ENCODE measurements at regions of chr3 and their contacts with region 1.

Region 1: GRCh38 chr3:48188266-48189201 is at the start of gene CDC25A:
- DNase-seq: peak; percentile 98
- H3K4me3 Mint-ChIP-seq: peak within 1 kb of the TSS; percentile 93
- H3K27ac Mint-ChIP-seq: peak within 1 kb of the TSS; percentile 89
- H3K4me1 Mint-ChIP-seq: peaks cover 22% of the 10 kb centered on the region
- H3K27me3 Mint-ChIP-seq: peaks cover 2% of the 10 kb centered on the region
- total RNA-seq, gene CDC25A: 57.0 and 60.2 TPM in 2 replicates

Region 2: GRCh38 chr3:48240711-48241491 is 52.4 kb after region 1 on chr3 and contains the start of gene ZNF589:
- intact Hi-C with region 1: loop called (anchors 1 kb)
- DNase-seq: peak; percentile 98
- H3K4me3 Mint-ChIP-seq: peak within 1 kb of the TSS; percentile 90
- H3K27ac Mint-ChIP-seq: peak within 1 kb of the TSS; percentile 94
- H3K4me1 Mint-ChIP-seq: peaks cover 20% of the 10 kb centered on the region
- H3K27me3 Mint-ChIP-seq: no peaks in the 10 kb centered on the region
- total RNA-seq, gene ZNF589: 38.1 and 39.9 TPM in 2 replicates

Region 3: DNA sequence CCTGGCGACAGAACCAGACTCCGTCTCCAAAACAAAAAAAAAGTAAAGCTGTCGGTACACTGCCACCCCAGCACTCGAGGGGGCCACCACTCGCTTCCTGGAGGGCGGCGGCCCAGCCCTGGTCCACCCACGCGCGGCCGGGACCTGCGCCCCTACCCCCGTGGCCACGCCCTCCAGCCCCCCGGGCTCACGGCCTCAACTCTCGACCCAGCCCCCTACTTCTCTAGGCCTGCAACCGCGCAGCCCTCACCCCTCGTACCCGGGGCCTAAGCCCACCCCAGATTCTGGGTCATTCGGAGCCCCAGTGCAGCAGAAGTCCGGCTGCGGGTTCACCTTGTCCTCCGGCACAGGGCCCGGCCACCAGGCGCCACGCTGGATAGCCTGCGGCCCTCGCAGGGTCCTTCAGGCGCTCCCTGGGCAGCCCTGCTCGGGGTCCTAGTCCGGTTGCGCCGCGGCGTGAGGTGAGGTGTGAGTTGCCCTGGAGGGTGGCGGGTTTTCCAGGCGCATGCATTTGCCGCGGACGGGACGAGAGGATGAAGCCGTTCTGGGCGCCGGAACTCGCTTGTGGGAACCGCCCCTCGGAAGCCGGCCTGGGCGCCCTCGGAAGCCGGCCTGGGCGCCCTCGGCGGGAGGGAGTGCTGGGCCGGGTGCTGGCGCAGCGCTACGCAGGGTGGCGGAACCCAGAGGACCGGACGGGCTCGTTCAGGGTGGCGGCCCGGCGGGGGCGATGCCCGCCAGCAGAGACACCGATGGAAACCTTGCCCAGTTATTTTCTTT is 112.7 kb after region 1 on chr3:
- intact Hi-C with region 1: loop called (anchors 1 kb)
- DNase-seq: peak; percentile 97
- H3K4me3 Mint-ChIP-seq: peak within 1 kb of the TSS; percentile 96
- H3K27ac Mint-ChIP-seq: peak within 1 kb of the TSS; percentile 99
- H3K4me1 Mint-ChIP-seq: peaks cover 23% of the 10 kb centered on the region
- H3K27me3 Mint-ChIP-seq: peaks cover 14% of the 10 kb centered on the region

Region 4: DNA sequence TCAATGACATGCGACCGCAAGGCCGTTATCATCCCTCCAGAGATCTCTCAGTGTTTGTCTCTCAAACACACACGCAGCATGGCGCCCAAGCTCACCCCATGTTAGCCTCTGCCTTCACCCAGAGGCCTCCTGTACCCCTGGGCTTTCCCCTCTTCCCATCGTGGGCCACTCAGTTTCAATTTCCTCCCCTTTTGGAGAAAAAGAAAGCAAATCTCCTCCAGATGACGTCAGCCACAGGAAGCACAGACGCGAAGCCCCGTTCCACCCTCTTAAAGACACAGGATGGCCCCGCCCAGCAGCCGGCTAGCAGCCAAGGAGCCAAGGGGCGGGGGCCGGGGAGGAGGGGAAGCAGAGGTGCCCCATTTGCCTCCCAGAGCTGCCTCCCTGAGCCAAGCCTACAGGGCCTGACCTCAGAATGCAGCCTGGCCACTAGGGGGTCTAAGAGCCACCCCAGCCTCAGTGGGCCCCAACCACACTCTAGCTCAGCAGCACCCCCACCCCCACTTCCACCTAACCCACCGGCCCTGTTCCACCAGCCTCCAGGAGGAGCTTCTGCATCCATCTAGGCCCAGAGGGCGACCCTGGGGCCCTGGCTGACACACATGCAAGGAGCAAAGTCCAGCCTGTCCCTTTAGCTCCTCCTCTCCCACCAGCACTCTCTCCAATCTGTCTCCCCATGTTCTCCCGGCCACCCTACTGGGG is 284.5 kb after region 1 on chr3:
- intact Hi-C with region 1: loop called (anchors 1 kb)
- DNase-seq: peak; percentile 98
- H3K4me3 Mint-ChIP-seq: peak overlapping the region; percentile 85
- H3K27ac Mint-ChIP-seq: peak overlapping the region; percentile 97
- H3K4me1 Mint-ChIP-seq: peaks cover 47% of the 10 kb centered on the region
- H3K27me3 Mint-ChIP-seq: no peaks in the 10 kb centered on the region

Region 5: DNA sequence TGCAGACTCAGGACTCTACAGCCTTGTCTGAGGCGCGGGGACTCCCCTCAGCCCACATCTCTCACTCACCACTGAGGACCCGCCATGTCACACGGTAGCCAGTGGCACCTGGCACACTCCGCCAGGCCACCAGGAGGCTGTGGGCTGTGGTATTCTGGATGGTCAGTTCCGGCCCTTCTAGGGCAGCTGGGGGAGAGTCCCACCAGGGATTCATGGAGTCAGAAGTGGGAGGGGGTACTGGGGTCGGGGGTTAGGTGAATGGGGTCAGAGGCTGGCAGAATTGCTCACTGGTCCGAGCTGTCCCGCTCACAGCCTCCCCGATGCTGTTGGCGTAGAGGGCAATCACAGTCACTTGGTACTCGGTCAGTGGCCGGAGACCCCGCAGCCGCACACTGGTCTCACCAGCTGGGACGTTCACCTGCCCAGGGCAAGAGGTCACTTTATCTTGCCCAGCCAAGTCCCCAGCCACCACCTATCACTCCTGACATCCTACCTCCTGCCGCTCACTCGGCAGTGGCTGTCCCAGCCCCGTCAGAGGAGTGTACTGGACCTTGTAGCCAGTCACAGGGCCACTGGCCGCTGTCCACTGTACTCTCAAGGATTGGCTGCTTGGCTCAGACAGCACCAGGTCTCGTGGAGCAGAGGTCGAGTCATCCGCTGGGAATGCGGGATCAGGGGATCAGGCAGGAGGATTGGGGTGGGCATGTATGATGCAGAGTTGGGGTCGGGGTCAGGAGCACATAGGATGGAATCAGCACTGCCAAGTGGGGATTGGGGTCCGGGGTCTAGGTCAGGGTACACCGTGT is 404.0 kb after region 1 on chr3:
- intact Hi-C with region 1: no loop called
- DNase-seq: no peak
- H3K4me3 Mint-ChIP-seq: no peak overlapping the region
- H3K27ac Mint-ChIP-seq: no peak overlapping the region
- H3K4me1 Mint-ChIP-seq: peaks cover 2% of the 10 kb centered on the region
- H3K27me3 Mint-ChIP-seq: peaks cover 30% of the 10 kb centered on the region

Measured in activated CD4-positive, alpha-beta T cell treated with anti-CD3 and anti-CD28 coated beads, Interleukin-2, amount 10 ng/mL, durations not matched to agents 24 days and 14 days (primary cell).